H1 (cell line): ENCODE measurements at regions of chr20 and their contacts with region 1.

Region 1: DNA sequence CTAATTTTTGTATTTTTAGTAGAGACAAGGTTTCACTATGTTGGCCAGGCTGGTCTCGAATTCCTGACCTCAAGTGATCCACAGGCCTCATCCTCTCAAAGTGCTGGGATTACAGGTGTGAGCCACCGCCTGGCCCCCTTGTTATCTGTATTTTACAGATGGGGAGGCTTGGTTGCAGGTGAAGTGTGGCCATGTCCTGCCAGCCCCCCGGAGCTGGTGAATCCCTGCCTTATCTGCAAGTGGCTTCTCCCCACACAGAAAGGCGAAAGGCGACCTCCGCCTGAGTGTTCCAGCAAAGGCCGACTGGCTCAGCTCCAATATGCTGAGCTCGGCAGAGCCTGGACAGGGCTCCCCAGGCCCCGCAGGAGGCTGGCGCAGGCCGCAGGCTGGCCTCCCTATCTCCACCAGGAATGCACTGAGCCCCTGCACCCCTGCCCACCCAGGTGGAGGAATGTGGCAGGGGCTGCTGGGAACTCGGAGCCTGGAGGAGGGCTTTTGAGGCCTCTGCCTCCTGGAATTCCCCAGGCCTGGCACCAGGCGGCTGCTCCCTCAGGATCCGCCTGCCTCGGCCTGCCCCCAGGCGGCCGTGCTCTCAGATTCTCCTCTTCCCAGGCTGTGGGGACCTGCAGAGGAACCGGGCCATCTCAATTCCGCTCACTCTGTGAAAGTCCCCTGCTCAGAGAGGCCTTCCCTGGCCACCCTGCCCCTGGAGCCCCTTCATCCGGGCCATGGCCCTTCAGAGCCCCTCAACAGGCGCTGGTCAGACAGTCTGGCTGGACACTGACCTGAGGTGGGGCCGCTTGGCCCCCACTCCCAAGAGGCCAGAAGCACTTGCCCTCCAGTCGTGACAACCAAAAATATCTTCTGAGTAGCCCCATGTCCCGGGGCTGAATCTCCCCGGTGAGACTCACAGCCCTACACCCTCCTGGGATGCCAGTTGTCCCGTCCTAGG is 9.3 kb upstream of the LAMA5 start:
- DNase-seq: peak; percentile 78 to 85
- H3K4me3 ChIP-seq: no peak overlapping the region
- H3K27ac ChIP-seq: peak overlapping the region; percentile 71; the same call in 1 of the 2 replicates
- H3K4me1 ChIP-seq: peaks cover 0 to 29% (median 28%) of the 10 kb centered on the region in 4 experiments; a peak in 6 of 7 replicates
- H3K27me3 ChIP-seq: no peaks in the 10 kb centered on the region
- CTCF ChIP-seq: peak; percentile 59 to 97 (median 79)
- EP300 ChIP-seq: peak in 1 of 2 experiments; percentile 61; a peak in 1 of 3 replicates
- POLR2A ChIP-seq: peak in 1 of 2 experiments; percentile 73; a peak in 2 of 3 replicates
- RAD21 ChIP-seq: peak; percentile 68 to 77

Region 2: GRCh38 chr20:62327726-62328495 is 48.5 kb before region 1 on chr20:
- CTCF ChIA-PET with region 1: interaction called, 4 read pairs
- POLR2A ChIA-PET with region 1: interaction called, 18 read pairs
- DNase-seq: no peak
- H3K4me3 ChIP-seq: no peak overlapping the region
- H3K27ac ChIP-seq: no peak overlapping the region
- H3K4me1 ChIP-seq: no peaks in the 10 kb centered on the region
- H3K27me3 ChIP-seq: no peaks in the 10 kb centered on the region
- CTCF ChIP-seq: peak in 1 of 3 experiments; percentile 13; a peak in 1 of 4 replicates
- EP300 ChIP-seq: no peak
- POLR2A ChIP-seq: no peak
- RAD21 ChIP-seq: peak in 1 of 2 experiments; percentile 20; a peak in 1 of 4 replicates

Region 3: DNA sequence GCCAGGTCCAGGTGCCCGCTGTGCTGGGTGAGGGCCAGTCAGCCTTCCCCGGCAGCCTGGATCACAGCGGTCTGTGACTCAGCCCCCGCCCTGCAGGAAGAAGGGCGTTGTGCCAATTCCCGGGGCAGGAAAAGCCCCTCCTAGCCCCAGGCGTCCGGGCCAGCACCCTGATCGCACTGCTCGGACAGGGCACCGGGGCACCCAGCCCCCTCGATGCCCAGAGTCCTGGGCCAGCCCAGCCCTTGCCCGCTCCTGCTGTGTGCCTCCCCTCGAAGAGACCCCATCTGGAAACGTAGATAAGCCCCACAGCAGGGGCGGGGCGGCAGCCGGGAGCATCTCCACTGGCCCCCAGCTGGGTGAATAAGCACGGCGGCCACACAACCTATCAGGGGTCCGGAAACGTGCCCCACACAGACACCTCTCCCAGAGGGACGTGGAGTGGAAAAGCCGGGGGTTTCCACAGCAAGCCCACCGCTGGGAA is 19.2 kb before region 1 on chr20:
- CTCF ChIA-PET with region 1: interaction called, 212 read pairs
- POLR2A ChIA-PET with region 1: interaction called, 213 read pairs
- DNase-seq: no peak
- H3K4me3 ChIP-seq: no peak overlapping the region
- H3K27ac ChIP-seq: no peak overlapping the region
- H3K4me1 ChIP-seq: peaks cover 3 to 59% (median 46%) of the 10 kb centered on the region in 4 experiments
- H3K27me3 ChIP-seq: no peaks in the 10 kb centered on the region
- CTCF ChIP-seq: no peak
- EP300 ChIP-seq: no peak
- POLR2A ChIP-seq: no peak
- RAD21 ChIP-seq: no peak

Region 4: DNA sequence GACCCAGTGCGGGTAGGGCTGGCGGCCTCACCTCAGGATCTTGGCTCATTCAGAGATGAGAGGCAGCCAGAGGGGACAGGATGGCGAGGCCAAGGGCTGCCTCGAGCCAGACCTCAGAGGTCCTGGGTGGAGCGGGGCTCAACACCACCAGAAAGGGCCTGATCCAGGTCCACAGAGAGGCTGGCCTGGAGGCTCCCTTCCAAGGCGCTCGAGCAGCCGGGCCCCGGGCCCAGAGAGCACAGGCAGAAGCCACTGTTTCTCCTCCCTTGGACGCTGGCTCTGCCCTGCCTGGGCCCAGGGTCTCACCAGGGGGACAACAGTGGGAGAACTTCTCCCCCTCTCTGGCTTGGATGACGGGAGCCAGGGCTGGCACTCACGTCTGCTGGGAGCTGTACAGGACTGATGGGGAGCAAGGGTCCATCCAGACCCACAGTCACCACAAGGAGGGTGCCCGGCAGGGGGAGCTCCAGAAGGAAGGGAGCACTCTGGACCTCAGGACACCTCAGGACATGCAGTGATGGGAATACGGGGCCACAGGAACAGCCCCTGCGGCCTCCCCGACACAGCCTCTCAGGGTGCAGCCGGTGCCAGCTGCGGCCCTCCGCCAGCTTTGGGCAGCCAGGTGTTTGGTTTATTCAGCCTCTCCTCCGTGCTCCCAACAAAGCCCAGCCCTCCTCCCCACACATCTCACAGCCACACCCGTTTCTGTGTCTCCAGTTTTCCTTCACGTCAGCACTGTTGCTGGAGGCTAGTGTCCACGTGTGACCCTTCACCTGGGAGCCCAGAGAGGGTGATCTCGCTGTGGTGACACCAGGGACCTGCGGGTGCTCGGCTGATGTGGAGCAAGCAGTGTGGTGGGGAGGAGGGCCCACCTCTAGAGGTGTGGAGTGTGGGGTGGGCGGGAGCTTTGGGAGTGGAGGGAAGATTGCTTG is 19.2 kb after region 1 on chr20:
- CTCF ChIA-PET with region 1: interaction called, 13 read pairs
- POLR2A ChIA-PET with region 1: interaction called, 176 read pairs
- DNase-seq: no peak
- H3K4me3 ChIP-seq: no peak overlapping the region
- H3K27ac ChIP-seq: no peak overlapping the region
- H3K4me1 ChIP-seq: no peaks in the 10 kb centered on the region
- H3K27me3 ChIP-seq: no peaks in the 10 kb centered on the region
- CTCF ChIP-seq: peak in 2 of 3 experiments; percentile 27 to 45; a peak in 3 of 4 replicates
- EP300 ChIP-seq: no peak
- POLR2A ChIP-seq: no peak
- RAD21 ChIP-seq: peak in 1 of 2 experiments; percentile 14; a peak in 1 of 4 replicates